ENCODE measurements at regions of chr11 and their contacts with region 1.

Region 1: GRCh38 chr11:85745626-85746025 is 59.6 kb upstream of the CCDC89 start:
- DNase-seq: no peak
- H3K4me3 Mint-ChIP-seq: no peak overlapping the region
- H3K27ac Mint-ChIP-seq: peak overlapping the region; percentile 54
- H3K4me1 Mint-ChIP-seq: peaks cover 72% of the 10 kb centered on the region
- H3K27me3 Mint-ChIP-seq: no peaks in the 10 kb centered on the region

Region 2: DNA sequence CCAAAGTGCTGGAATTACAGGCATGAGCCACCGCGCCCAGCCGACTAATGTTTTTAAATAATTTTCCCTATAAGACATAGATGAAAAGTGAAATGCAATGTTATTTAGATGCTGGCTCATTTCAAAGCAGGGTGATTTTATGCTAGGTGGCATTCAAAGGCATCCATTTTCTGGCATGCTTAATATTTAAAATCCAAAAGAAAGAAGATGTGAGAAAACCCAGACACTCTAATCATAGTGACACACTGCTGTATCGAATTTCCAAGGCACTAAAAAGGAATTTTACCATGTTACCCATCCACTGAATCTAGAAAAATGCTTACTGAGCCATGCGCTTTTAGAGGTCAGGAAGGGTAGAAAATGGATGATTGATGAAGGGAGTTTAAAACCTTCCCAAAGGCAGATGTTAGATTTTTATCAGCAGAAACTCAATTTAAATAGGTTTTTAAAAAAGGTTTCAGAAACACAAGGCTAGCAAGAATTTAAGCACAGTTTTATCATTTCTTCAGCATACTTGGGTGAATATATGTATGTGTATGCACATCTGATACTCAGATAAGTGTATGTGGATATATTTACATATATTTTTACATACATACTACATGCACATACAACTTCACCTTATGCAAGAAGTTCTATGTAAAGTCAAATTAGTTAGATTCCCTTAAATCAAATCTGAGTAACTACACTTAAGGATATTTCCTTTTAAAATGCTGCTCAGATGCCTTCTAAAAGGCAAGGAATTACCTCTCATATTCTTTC is 35.5 kb before region 1 on chr11:
- intact Hi-C with region 1: loop called (anchors 2 kb)
- DNase-seq: no peak
- H3K4me3 Mint-ChIP-seq: no peak overlapping the region
- H3K27ac Mint-ChIP-seq: no peak overlapping the region
- H3K4me1 Mint-ChIP-seq: peaks cover 5% of the 10 kb centered on the region
- H3K27me3 Mint-ChIP-seq: no peaks in the 10 kb centered on the region